Ascending aorta (tissue), 2 donors: ENCODE measurements at regions of chr17 and their contacts with region 1.

Region 1: DNA sequence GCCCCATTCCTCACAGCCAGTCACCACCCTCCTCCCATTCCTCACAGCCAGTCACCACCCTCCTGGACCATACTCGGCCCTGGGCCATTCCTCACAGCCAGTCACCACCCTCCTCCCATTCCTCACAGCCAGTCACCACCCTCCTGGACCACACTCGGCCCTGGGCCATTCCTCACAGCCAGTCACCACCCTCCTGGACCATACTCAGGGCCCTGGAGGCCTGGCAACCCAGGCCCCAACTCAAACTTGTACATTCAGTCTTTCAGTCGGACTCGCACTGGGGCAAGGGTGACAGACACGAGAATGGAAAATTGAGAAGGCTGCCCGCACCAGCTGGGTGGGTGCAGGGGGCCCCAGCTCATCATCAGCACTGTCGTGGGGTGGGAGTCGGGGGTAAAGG is 30.4 kb upstream of the FOXK2 start:
- DNase-seq: peak; percentile 83 to 95
- H3K4me3 ChIP-seq: no peak overlapping the region
- H3K27ac ChIP-seq: peak overlapping the region; percentile 91 to 98
- H3K4me1 ChIP-seq: peaks cover 8 to 24% of the 10 kb centered on the region in 2 donors
- H3K27me3 ChIP-seq: no peaks in the 10 kb centered on the region
- CTCF ChIP-seq: no peak

Region 2: GRCh38 chr17:82457997-82458864 is 30.9 kb before region 1 on chr17 and contains the start of gene NARF:
- intact Hi-C with region 1: loop called (anchors 1 kb)
- DNase-seq: peak; percentile 92 to 99
- H3K4me3 ChIP-seq: peak within 1 kb of the TSS; percentile 77 to 86
- H3K27ac ChIP-seq: peak within 1 kb of the TSS; percentile 100
- H3K4me1 ChIP-seq: peaks cover 0 to 12% of the 10 kb centered on the region in 2 donors
- H3K27me3 ChIP-seq: no peaks in the 10 kb centered on the region
- CTCF ChIP-seq: no peak
- total RNA-seq, gene NARF: 38.3 TPM

Region 3: GRCh38 chr17:82978765-82979349 is 489.7 kb after region 1 on chr17:
- intact Hi-C with region 1: no loop called
- DNase-seq: no peak
- H3K4me3 ChIP-seq: no peak overlapping the region
- H3K27ac ChIP-seq: no peak overlapping the region
- H3K4me1 ChIP-seq: no peaks in the 10 kb centered on the region
- H3K27me3 ChIP-seq: no peaks in the 10 kb centered on the region
- CTCF ChIP-seq: no peak